ENCODE measurements at regions of chr21 and their contacts with region 1.

Region 1: DNA sequence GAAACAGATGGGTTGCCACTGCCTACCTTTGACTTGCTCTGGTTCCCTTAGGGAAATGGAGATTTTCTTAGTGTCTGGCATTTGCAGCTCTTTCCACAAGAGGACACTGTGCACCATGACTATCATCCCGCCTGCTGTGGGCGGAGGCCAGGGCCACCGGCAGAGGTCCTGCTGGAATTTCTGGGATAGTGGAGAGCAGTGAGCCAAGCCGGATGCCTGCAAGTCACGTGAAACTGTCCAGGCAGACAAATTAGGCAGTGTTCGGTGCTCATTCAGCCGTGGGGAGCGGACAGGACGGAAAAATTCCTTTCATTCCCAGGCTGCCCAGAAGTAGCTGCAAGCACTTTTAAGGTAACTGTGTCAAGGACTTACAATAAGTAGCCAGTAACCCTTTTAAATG is 43.4 kb downstream of the IGSF5 start:
- DNase-seq: peak; percentile 70
- H3K4me3 ChIP-seq: no peak overlapping the region
- H3K27ac ChIP-seq: no peak overlapping the region
- H3K4me1 ChIP-seq: no peaks in the 10 kb centered on the region
- H3K27me3 ChIP-seq: no peaks in the 10 kb centered on the region
- CTCF ChIP-seq: peak; percentile 65 to 72
- POLR2A ChIP-seq: no peak

Region 2: DNA sequence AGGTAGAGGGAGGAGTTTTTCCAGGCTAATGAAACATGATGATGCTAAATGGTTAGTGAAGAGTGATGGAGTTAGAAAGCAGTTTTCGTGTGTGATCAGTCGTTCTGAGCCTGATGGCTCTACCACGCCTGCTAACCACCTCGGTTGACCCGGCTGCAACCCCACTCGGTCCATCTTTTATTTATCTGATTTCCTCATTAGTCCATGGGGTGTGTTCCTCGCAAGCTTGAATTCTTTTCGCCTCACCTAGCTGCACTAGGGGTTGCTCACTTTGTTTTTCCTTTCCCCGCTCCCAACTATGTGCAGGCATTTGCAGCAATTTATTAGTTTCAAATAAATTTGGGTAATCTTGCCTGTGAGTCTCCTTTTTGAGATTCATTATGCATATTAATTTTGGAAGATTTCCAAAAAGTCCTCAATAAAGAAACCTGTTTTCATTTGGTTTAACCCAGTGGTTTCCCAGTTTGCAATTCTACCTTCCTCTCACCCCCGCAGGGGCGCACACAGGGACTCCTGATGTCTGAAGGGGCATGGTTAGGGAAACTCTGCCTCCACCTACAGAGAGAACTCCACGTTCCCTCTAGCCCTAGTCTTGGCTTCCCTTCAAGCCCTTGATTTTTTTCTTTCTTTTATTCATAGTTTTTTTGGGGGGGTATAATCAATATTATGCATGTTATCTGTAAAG is 163.0 kb before region 1 on chr21:
- CTCF ChIA-PET with region 1: no interaction called
- POLR2A ChIA-PET with region 1: no interaction called
- dilution Hi-C with region 1: no loop called
- intact Hi-C with region 1: no loop called
- DNase-seq: no peak
- H3K4me3 ChIP-seq: no peak overlapping the region
- H3K27ac ChIP-seq: no peak overlapping the region
- H3K4me1 ChIP-seq: no peaks in the 10 kb centered on the region
- H3K27me3 ChIP-seq: no peaks in the 10 kb centered on the region
- CTCF ChIP-seq: no peak
- POLR2A ChIP-seq: no peak

Region 3: GRCh38 chr21:41068967-41069642 is 1280.7 kb after region 1 on chr21:
- CTCF ChIA-PET with region 1: no interaction called
- POLR2A ChIA-PET with region 1: no interaction called
- dilution Hi-C with region 1: no loop called
- intact Hi-C with region 1: loop called (anchors 1 kb)
- DNase-seq: peak; percentile 30
- H3K4me3 ChIP-seq: no peak overlapping the region
- H3K27ac ChIP-seq: no peak overlapping the region
- H3K4me1 ChIP-seq: no peaks in the 10 kb centered on the region
- H3K27me3 ChIP-seq: no peaks in the 10 kb centered on the region
- CTCF ChIP-seq: peak; percentile 73 to 84
- POLR2A ChIP-seq: no peak

Measured in endothelial cell of umbilical vein (primary cell).